ENCODE measurements at regions of chr5 and their contacts with region 1.

Region 1: GRCh38 chr5:38441453-38442246 is 114.8 kb downstream of the LIFR start:
- DNase-seq: peak; percentile 70 to 89
- H3K4me3 ChIP-seq: no peak overlapping the region
- H3K27ac ChIP-seq: no peak overlapping the region
- H3K4me1 ChIP-seq: no peaks in the 10 kb centered on the region
- H3K27me3 ChIP-seq: no peaks in the 10 kb centered on the region
- CTCF ChIP-seq: peak; percentile 73 to 98 (median 97)
- EP300 ChIP-seq: no peak
- POLR2A ChIP-seq: no peak
- RAD21 ChIP-seq: peak; percentile 99 to 100

Region 2: GRCh38 chr5:38273624-38274023 is 168.0 kb before region 1 on chr5:
- CTCF ChIA-PET with region 1: no interaction called
- POLR2A ChIA-PET with region 1: no interaction called
- DNase-seq: no peak
- H3K4me3 ChIP-seq: no peak overlapping the region
- H3K27ac ChIP-seq: no peak overlapping the region
- H3K4me1 ChIP-seq: no peaks in the 10 kb centered on the region
- H3K27me3 ChIP-seq: no peaks in the 10 kb centered on the region
- CTCF ChIP-seq: no peak
- EP300 ChIP-seq: no peak
- POLR2A ChIP-seq: no peak
- RAD21 ChIP-seq: no peak

Region 3: GRCh38 chr5:38316544-38317224 is 125.0 kb before region 1 on chr5:
- CTCF ChIA-PET with region 1: no interaction called
- POLR2A ChIA-PET with region 1: no interaction called
- DNase-seq: no peak
- H3K4me3 ChIP-seq: no peak overlapping the region
- H3K27ac ChIP-seq: no peak overlapping the region
- H3K4me1 ChIP-seq: no peaks in the 10 kb centered on the region
- H3K27me3 ChIP-seq: no peaks in the 10 kb centered on the region
- CTCF ChIP-seq: no peak
- EP300 ChIP-seq: no peak
- POLR2A ChIP-seq: no peak
- RAD21 ChIP-seq: no peak

Region 4: DNA sequence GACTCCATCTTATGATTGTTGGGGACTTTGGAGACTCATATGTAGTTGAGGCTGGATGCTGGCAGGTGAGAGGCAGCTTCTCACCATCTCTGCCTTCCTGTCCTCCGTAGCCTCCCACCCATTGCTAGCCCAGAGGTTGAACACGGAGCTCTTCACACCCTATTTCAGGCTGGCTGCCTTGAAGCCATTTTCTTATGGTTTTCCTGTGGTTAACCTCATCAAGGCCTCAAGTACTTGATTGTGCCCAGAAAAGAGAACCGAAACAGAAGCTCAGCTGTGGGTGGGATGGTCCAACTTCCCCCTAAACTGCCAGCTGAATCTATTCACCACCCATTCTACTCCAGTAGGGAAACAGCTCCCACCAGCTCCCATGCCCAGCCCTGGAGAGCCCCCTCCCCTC is 11.9 kb after region 1 on chr5:
- CTCF ChIA-PET with region 1: interaction called, 14 read pairs
- POLR2A ChIA-PET with region 1: no interaction called
- DNase-seq: no peak
- H3K4me3 ChIP-seq: no peak overlapping the region
- H3K27ac ChIP-seq: no peak overlapping the region
- H3K4me1 ChIP-seq: no peaks in the 10 kb centered on the region
- H3K27me3 ChIP-seq: no peaks in the 10 kb centered on the region
- CTCF ChIP-seq: no peak
- EP300 ChIP-seq: no peak
- POLR2A ChIP-seq: no peak
- RAD21 ChIP-seq: no peak

Region 5: DNA sequence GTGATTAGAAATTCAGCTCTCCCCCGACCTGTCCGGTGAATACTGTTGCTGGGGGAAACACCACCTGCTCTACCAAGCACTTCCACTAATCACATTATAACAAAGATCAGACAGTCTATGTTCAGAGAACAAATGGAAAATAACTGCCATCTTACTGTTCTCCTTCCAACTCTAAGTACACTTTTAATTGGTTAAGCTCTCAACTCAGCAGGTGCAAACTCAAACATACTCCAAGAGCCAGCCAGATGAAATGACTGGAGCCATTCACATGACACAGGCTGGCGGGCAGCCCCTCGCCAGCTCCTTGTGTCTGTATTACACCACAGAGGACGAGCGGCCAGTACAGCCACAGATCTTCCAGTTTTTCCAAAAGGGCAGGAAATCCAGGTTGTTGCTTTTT is 98.7 kb after region 1 on chr5:
- CTCF ChIA-PET with region 1: interaction called, 18 read pairs
- POLR2A ChIA-PET with region 1: no interaction called
- DNase-seq: no peak
- H3K4me3 ChIP-seq: no peak overlapping the region
- H3K27ac ChIP-seq: no peak overlapping the region
- H3K4me1 ChIP-seq: peaks cover 0 to 5% (median 1%) of the 10 kb centered on the region in 4 experiments; a peak in 1 of 7 replicates
- H3K27me3 ChIP-seq: no peaks in the 10 kb centered on the region
- CTCF ChIP-seq: no peak
- EP300 ChIP-seq: no peak
- POLR2A ChIP-seq: no peak
- RAD21 ChIP-seq: no peak

Region 6: GRCh38 chr5:38666668-38667498 is 225.2 kb after region 1 on chr5:
- CTCF ChIA-PET with region 1: interaction called, 19 read pairs
- POLR2A ChIA-PET with region 1: no interaction called
- DNase-seq: peak in 1 of 2 experiments; percentile 48
- H3K4me3 ChIP-seq: no peak overlapping the region
- H3K27ac ChIP-seq: no peak overlapping the region
- H3K4me1 ChIP-seq: no peaks in the 10 kb centered on the region
- H3K27me3 ChIP-seq: no peaks in the 10 kb centered on the region
- CTCF ChIP-seq: peak; percentile 67 to 72 (median 67)
- EP300 ChIP-seq: no peak
- POLR2A ChIP-seq: no peak
- RAD21 ChIP-seq: peak; percentile 71 to 82

Region 7: DNA sequence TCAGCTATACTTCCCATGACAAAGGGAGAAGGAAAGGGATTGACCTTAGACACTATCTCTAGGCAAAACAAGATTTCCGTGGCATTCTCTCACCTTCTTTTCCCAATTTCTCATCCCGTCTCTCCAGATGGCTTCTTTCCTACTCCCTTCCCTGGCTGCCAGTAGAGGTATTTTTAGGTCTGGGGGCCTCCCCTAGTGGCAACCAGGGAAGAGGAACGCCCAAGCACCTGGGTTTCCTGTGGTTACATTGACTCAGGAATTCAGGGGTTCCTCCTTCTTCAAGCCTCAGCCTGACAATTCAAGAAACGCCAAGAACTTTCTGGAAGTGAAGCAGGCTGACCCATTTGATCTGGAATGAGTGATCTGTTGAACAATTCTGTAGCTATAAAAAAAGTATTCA is 292.7 kb after region 1 on chr5:
- CTCF ChIA-PET with region 1: interaction called, 12 read pairs
- POLR2A ChIA-PET with region 1: no interaction called
- DNase-seq: peak in 1 of 2 experiments; percentile 43
- H3K4me3 ChIP-seq: no peak overlapping the region
- H3K27ac ChIP-seq: no peak overlapping the region
- H3K4me1 ChIP-seq: no peaks in the 10 kb centered on the region
- H3K27me3 ChIP-seq: no peaks in the 10 kb centered on the region
- CTCF ChIP-seq: peak; percentile 58 to 76 (median 75)
- EP300 ChIP-seq: no peak; a peak in 1 of 3 replicates
- POLR2A ChIP-seq: no peak
- RAD21 ChIP-seq: peak; percentile 83 to 86

Region 8: DNA sequence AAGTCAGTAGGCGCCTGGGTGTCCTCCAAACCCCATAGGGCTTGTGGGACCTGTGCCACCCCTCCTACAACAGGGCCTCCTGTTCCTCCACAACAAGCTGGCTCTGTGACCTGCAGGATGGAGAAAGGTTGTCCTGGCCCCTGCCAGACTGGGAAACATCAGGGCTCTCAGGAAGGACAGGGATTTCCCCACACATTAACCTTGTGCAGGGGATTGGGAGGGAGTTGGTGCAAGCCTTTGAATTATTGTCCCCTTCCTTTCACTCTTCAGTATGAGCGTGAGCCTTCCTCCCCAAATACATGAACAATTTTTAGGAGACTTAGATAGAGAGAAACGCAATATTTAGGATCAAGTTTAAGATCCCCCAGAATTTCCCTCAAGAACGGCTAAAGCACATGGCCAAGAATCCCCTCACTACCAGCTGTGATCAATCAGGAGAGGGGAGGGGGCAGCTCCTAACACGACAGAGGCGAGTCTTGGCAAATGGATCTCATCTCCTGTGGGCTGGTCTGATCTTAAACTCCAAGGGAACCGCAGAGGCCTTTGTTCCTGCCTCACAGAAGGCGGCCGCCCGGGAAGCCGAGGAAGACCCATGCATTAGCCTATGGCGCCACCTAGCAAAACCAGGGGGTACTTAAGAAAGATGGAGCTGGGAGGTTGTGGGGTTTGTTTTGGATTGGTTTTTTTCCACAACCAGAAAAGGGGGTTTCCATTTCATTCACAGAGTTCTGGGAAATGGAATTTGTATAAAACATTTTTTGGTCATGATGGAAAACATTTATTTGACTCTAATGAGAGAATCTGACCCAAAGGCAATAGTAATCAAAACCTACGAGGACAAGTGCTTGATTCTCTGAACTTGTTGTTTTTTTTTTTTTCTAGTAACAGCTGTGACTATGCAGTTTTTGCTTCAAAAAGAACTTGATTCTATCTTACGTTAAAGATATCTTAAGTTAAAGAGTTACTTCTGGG is 368.0 kb after region 1 on chr5:
- CTCF ChIA-PET with region 1: interaction called, 63 read pairs
- POLR2A ChIA-PET with region 1: no interaction called
- DNase-seq: peak; percentile 60 to 84
- H3K4me3 ChIP-seq: no peak overlapping the region
- H3K27ac ChIP-seq: no peak overlapping the region
- H3K4me1 ChIP-seq: peaks cover 0 to 3% (median 0%) of the 10 kb centered on the region in 4 experiments; a peak in 2 of 7 replicates
- H3K27me3 ChIP-seq: peaks cover 0 to 3% (median 0%) of the 10 kb centered on the region in 4 experiments; a peak in 2 of 7 replicates
- CTCF ChIP-seq: peak; percentile 59 to 92 (median 80)
- EP300 ChIP-seq: no peak
- POLR2A ChIP-seq: no peak
- RAD21 ChIP-seq: peak; percentile 97 to 99